RWPE1 (cell line): ENCODE measurements at regions of chr1 and their contacts with region 1.

Region 1: DNA sequence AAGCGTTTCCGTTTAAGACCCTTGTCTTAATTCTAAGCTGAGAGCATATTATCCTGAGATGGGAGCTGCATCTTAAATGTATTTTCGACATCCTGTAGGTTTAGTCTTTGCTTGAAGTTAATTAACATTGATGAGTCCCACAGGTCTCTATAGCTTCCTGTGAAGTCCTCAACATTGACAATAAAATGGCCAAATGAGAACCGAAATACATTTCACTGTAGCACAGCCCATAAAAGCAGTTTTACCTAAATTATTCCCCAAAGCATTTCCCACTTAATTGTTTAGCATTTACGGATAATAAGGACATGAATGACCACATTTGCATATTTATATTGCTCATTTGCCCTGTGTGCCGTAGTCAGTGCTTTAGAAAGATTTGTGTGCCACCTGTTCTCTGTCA is 116.4 kb downstream of the CRB1 start:
- DNase-seq: no peak
- H3K27ac ChIP-seq: no peak overlapping the region
- CTCF ChIP-seq: no peak

Region 2: GRCh38 chr1:197342044-197342565 is 42.4 kb before region 1 on chr1:
- CTCF ChIA-PET with region 1: no interaction called
- POLR2A ChIA-PET with region 1: no interaction called
- DNase-seq: no peak
- H3K27ac ChIP-seq: no peak overlapping the region
- CTCF ChIP-seq: no peak

Region 3: GRCh38 chr1:197399755-197400527 is 15.5 kb after region 1 on chr1:
- CTCF ChIA-PET with region 1: interaction called, 13 read pairs
- POLR2A ChIA-PET with region 1: interaction called, 4 read pairs
- DNase-seq: peak; percentile 76
- H3K27ac ChIP-seq: no peak overlapping the region
- CTCF ChIP-seq: peak; percentile 45

Region 4: DNA sequence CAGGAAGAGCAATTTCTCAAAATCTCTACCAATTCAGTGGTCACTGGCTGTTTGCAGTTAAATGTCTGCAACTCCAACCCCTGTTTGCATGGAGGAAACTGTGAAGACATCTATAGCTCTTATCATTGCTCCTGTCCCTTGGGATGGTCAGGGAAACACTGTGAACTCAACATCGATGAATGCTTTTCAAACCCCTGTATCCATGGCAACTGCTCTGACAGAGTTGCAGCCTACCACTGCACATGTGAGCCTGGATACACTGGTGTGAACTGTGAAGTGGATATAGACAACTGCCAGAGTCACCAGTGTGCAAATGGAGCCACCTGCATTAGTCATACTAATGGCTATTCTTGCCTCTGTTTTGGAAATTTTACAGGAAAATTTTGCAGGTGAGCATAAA is 50.8 kb after region 1 on chr1:
- CTCF ChIA-PET with region 1: no interaction called
- POLR2A ChIA-PET with region 1: no interaction called
- DNase-seq: no peak
- H3K27ac ChIP-seq: no peak overlapping the region
- CTCF ChIP-seq: no peak